ENCODE measurements at regions of chr17 and their contacts with region 1.

Region 1: DNA sequence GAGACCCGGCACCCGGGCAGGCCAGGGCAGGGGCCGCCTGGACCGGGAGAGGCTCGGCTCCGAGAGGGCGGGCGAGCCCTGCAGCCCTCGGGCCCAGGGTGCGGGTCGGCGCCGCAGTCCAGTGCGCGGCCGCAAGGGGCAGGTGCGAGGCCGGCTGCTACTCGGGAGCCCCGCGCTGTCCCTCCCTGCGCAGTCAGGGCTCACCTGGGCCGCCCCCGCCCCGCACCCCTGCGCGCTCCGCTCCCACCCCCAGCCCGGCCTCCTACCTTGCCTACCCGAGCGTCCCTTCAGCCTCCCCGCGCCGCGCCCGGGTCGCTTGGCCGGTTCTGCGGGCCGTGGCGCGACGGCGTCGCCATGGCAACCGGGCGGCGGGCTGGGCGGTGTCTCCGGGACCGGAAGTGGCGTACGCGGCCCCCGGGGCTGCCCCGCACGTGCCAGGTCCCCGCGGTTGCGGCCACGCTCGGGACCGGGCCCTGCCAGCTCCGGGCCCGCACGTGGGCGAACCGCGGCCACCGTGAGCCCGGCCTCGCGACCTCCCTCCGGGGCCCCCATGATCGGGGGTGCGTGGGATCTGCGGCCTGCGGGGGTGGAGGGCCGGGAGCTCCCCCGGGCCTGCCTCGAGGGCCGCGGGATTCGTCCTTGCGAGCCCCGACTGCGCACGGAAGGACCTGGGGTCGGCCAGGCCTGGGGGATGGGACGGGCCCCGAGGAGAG is at the start of gene CYB561:
- DNase-seq: peak; percentile 69 to 93
- H3K4me3 ChIP-seq: peak within 1 kb of the TSS; percentile 67
- H3K27ac ChIP-seq: peak within 1 kb of the TSS; percentile 94
- H3K4me1 ChIP-seq: peaks cover 21% of the 10 kb centered on the region
- H3K27me3 ChIP-seq: no peaks in the 10 kb centered on the region
- CTCF ChIP-seq: peak; percentile 59; the same call in 1 of the 2 replicates
- total RNA-seq, gene CYB561: 61.6 and 71.6 TPM in 2 replicates

Region 2: DNA sequence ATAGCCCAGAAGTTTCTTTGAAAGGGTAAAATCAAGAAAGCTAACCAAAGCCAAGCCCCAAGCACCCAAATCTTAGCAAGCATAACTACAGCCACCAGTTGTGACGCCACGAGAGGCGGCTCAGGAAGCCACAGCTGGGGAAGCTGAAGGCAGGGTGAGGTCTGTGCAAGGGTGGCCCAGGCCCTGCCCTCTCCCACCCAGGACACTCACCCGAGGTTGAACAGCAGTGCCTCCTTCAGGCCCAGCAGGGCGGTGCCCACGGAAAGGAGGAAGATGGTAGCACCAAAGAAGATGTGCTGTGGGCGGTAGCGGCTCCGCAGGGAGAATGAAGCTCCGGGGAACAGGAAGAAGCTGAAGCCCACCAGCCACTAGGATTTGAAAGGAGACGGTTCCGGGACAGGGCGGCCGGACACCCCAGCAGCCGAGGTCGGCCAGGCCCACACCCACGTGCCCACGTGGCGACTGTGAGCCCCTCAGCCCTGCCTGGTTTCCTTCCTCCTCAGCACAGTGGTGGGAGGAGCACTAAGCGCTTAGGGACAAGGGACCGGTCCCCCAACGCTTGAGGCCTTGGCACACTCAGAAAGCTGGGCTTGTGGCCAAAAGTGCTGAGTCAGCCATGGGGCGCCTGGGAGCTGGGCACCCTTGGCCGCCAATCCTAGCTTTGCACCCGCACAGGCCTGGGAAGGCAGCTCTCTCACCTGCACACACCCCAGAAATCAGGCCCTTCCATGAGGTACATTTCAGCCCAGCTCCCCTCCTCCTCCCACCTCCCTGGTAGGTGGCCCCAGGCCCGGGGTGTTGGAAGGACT is 11.1 kb before region 1 on chr17:
- CTCF ChIA-PET with region 1: no interaction called
- POLR2A ChIA-PET with region 1: interaction called, 7 read pairs
- intact Hi-C with region 1: loop called (anchors 2 kb)
- DNase-seq: peak; percentile 68 to 89
- H3K4me3 ChIP-seq: no peak overlapping the region
- H3K27ac ChIP-seq: no peak overlapping the region
- H3K4me1 ChIP-seq: peaks cover 11% of the 10 kb centered on the region
- H3K27me3 ChIP-seq: no peaks in the 10 kb centered on the region
- CTCF ChIP-seq: no peak; the same call in 1 of the 2 replicates

Region 3: DNA sequence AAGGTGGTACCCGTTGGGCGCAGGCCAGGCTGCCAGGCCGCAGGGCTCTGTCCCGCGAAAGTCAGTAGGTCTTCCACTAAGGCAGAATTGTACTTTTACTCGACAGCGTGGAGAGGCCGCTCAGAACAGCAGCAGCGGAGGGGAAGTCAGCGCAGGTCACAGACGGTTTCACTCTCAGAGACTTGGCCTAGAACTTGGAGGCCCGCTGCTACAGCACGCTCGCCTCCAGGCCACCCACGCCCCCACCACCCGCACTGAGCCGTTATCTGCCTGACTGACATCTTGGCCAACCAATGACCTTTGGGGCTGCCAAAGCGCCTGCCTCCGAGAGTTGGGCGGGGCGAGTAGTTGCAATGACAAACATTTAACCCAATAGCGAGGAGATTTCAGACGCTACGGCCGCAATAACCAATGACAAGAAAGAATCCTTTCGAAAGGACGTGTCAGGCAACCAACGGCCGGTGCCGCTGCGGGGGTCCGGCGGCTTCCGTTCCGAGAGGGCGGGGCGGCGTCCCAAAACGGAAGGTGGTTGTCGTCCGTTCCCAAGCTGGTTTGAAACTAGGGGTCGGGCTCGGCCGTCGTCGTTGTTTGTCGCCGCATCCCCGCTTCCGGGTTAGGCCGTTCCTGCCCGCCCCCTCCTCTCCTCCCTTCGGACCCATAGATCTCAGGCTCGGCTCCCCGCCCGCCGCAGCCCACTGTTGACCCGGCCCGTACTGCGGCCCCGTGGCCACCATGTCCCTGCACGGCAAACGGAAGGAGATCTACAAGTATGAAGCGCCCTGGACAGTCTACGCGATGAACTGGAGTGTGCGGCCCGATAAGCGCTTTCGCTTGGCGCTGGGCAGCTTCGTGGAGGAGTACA is 104.0 kb after region 1 on chr17 and contains the start of gene DCAF7:
- CTCF ChIA-PET with region 1: no interaction called
- POLR2A ChIA-PET with region 1: no interaction called
- intact Hi-C with region 1: loop called (anchors 5 kb)
- DNase-seq: peak; percentile 98 to 99
- H3K4me3 ChIP-seq: peak within 1 kb of the TSS; percentile 75
- H3K27ac ChIP-seq: peak within 1 kb of the TSS; percentile 62
- H3K4me1 ChIP-seq: peaks cover 22% of the 10 kb centered on the region
- H3K27me3 ChIP-seq: no peaks in the 10 kb centered on the region
- CTCF ChIP-seq: no peak
- total RNA-seq, gene DCAF7: 62.2 and 78.9 TPM in 2 replicates

Region 4: GRCh38 chr17:63714547-63715277 is 268.6 kb after region 1 on chr17:
- CTCF ChIA-PET with region 1: no interaction called
- POLR2A ChIA-PET with region 1: no interaction called
- intact Hi-C with region 1: no loop called
- DNase-seq: no peak
- H3K4me3 ChIP-seq: no peak overlapping the region
- H3K27ac ChIP-seq: no peak overlapping the region
- H3K4me1 ChIP-seq: no peaks in the 10 kb centered on the region
- H3K27me3 ChIP-seq: no peaks in the 10 kb centered on the region
- CTCF ChIP-seq: no peak

Region 5: DNA sequence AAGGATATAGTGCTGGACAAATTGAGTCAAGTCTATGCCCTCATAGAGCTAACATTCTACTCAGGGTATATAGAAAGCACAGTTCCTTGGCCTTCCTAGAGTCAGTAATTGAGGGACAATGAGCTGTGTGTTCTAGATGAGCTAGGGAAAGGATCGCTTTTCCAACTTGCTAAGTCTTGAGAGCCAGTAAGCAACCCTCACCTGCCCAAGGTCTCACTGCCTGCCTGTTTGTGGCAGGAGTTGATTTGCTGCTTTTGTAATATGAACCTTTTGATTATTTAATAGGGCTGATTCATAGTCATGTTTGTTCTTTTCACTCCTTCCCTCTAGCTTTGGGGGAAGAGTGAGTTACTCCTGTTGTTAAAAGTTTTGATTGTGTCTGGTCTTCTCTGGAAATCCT is 334.4 kb after region 1 on chr17:
- CTCF ChIA-PET with region 1: no interaction called
- POLR2A ChIA-PET with region 1: no interaction called
- intact Hi-C with region 1: no loop called
- DNase-seq: peak; percentile 49 to 86
- H3K4me3 ChIP-seq: peak overlapping the region; percentile 9; the same call in 1 of the 2 replicates
- H3K27ac ChIP-seq: peak overlapping the region; percentile 61
- H3K4me1 ChIP-seq: peaks cover 79% of the 10 kb centered on the region
- H3K27me3 ChIP-seq: no peaks in the 10 kb centered on the region
- CTCF ChIP-seq: no peak

Region 6: DNA sequence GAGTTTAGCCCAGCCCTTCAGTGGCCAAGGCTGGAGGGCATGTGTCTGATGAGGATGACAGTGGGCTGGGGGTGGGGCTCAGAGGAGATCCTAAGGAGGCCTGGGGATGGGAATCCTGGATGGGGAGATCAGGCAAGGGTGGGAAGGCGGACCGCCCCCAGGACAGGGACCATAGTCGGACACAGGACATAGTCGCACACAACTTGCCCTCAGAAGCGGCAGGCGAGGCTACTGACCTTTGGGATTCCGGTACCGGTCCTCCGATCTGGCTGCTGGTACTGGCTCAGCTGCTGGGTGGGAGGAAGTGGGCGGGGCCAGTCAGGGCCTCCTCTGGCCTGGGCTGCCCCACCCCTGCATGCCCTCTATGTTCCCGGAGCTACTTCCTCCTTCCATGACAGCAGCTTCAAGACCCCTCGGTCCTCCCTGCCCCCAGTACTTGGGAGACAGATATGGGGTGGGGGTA is 485.0 kb after region 1 on chr17:
- CTCF ChIA-PET with region 1: no interaction called
- POLR2A ChIA-PET with region 1: no interaction called
- intact Hi-C with region 1: no loop called
- DNase-seq: no peak
- H3K4me3 ChIP-seq: no peak overlapping the region
- H3K27ac ChIP-seq: no peak overlapping the region
- H3K4me1 ChIP-seq: no peaks in the 10 kb centered on the region
- H3K27me3 ChIP-seq: peaks cover 14% of the 10 kb centered on the region; the same call in 1 of the 2 replicates
- CTCF ChIP-seq: no peak